CD8-positive, alpha-beta T cell (primary cell): ENCODE measurements at regions of chr10 and their contacts with region 1.

Region 1: DNA sequence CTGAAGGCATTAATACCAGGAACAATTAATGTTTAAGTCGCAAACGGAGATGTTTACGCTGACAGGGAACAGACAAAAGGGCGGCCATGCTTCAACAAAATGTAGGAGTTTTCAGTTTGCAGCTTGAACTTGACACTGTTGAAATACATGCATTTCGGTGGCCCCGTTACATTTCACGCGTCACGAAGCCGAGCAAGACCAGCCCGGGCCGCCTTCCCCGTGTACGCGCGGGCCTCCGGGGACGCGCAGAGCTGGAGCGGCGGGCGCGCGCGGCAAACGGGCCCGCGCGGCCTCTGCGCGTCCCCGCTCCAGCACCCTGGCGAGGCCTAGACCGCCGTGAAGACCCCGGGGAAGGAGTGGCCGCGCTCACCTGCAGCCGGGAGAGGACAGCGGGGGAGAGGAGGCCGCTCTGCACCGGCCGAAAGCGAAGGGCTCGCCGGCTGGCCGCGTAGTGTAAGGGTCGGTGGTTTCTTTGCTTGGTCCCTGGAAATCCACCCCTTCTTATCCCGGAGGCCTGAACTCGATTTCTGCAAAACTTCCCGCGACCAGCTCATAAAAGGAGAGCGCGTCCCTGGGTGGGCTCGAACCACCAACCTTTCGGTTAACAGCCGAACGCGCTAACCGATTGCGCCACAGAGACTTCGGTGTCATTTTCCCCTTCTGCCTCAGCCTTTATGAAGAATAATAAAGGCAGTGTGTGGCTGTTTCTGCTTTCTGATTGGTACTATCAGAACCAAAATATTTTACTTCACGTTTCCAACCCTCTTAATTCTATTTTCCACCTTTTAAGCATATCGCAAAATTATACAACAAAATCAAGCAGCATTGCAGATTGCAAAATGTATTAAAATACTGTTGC is 11.4 kb upstream of the EBLN1 start:
- DNase-seq: peak; percentile 66 to 92 (median 86)
- ATAC-seq: peak; percentile 76
- H3K4me3 ChIP-seq: peak overlapping the region; percentile 67 to 77
- H3K4me3 Mint-ChIP-seq: peak overlapping the region; percentile 82
- H3K27ac ChIP-seq: peak overlapping the region; percentile 60 to 63
- H3K27ac Mint-ChIP-seq: peak overlapping the region; percentile 98
- H3K4me1 ChIP-seq: peaks cover 8% of the 10 kb centered on the region
- H3K4me1 Mint-ChIP-seq: peaks cover 14% of the 10 kb centered on the region
- H3K27me3 ChIP-seq: peaks cover 0 to 3% of the 10 kb centered on the region in 2 experiments
- H3K27me3 Mint-ChIP-seq: no peaks in the 10 kb centered on the region
- CTCF ChIP-seq: no peak

Region 2: DNA sequence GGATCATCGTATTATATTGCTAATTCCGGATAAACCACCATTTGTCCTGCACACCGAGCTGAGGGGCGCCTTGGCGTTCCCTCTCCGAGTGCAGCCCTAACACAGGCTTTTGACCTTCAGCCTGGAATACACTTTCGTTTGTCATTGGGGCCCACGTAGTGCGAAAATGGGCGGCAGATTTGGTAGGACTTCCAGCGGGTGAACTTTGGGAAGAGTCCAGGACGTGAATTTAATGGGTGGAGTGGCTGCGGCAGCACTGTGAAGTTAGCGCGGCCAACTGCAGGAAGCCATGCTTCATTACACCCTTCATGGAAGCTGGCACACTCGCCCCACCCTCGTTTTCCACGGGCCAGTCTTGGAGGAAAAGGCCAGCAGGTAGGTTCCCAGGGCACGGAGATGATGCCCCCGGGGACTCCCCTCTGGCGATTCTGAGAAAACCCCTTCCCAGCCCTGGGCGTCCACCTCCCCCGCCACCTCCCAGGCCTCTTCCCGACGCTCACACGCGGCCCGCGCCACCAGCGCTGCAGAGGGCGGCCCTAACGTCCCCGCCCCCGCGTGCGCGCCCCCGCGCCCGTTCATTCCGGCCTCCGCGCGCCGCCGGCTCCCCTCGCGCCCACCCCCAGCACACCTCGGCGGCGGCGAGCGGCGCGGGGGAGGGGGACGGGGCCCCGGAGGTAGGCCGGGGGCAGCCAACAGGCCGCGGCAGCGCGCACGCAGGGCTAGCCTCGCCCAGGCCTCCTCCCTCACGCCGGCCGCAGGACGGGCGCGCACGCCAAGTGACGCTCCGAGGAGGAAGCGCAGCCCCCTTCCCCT is 695.5 kb before region 1 on chr10 and contains the start of gene MLLT10:
- CTCF ChIA-PET with region 1: no interaction called
- POLR2A ChIA-PET with region 1: no interaction called
- intact Hi-C with region 1: loop called (anchors 1 kb)
- DNase-seq: peak; percentile 83 to 98 (median 92)
- ATAC-seq: peak; percentile 84
- H3K4me3 ChIP-seq: peak within 1 kb of the TSS; percentile 69 to 81
- H3K4me3 Mint-ChIP-seq: peak within 1 kb of the TSS; percentile 96
- H3K27ac ChIP-seq: peak within 1 kb of the TSS; percentile 64 to 75
- H3K27ac Mint-ChIP-seq: peak within 1 kb of the TSS; percentile 94
- H3K4me1 ChIP-seq: peaks cover 16% of the 10 kb centered on the region
- H3K4me1 Mint-ChIP-seq: peaks cover 29% of the 10 kb centered on the region
- H3K27me3 ChIP-seq: no peaks in the 10 kb centered on the region
- H3K27me3 Mint-ChIP-seq: no peaks in the 10 kb centered on the region
- CTCF ChIP-seq: peak; percentile 22
- total RNA-seq, gene MLLT10: 36.7 to 41.0 TPM

Region 3: GRCh38 chr10:22022257-22023032 is 206.7 kb before region 1 on chr10:
- CTCF ChIA-PET with region 1: no interaction called
- POLR2A ChIA-PET with region 1: no interaction called
- intact Hi-C with region 1: loop called in 1 of 2 experiments (anchors 5 kb)
- DNase-seq: peak; percentile 8 to 71 (median 40)
- ATAC-seq: peak; percentile 95
- H3K4me3 ChIP-seq: peak overlapping the region; percentile 23 to 33
- H3K4me3 Mint-ChIP-seq: peak overlapping the region; percentile 81
- H3K27ac ChIP-seq: peak overlapping the region; percentile 18 to 61
- H3K27ac Mint-ChIP-seq: peak overlapping the region; percentile 95
- H3K4me1 ChIP-seq: peaks cover 13% of the 10 kb centered on the region
- H3K4me1 Mint-ChIP-seq: peaks cover 15% of the 10 kb centered on the region
- H3K27me3 ChIP-seq: no peaks in the 10 kb centered on the region
- H3K27me3 Mint-ChIP-seq: no peaks in the 10 kb centered on the region
- CTCF ChIP-seq: no peak

Region 4: DNA sequence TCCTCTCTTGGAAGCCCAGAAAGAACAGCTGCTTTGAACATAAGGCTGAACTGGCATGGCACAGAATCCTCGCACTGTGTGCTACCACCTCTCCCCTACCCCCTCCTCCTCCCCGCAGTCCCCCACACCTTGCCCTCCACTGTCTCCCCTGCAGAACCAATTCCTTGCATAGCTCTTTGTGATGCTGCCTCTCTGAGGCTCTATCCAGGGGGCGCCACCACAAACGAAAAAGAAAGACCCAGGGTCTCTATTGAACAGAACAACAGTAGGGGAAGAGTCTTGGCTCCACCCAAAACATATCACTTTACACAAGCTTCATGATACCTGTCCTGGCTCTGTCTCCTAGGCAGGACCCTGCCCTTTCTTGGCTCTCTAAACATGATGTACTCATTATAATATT is 14.8 kb after region 1 on chr10:
- CTCF ChIA-PET with region 1: interaction called, 4 read pairs
- POLR2A ChIA-PET with region 1: interaction called, 4 read pairs
- intact Hi-C with region 1: loop called (anchors 1 to 2 kb)
- DNase-seq: peak in 2 of 9 experiments; percentile 15 to 29
- ATAC-seq: no peak
- H3K4me3 ChIP-seq: no peak overlapping the region
- H3K4me3 Mint-ChIP-seq: no peak overlapping the region
- H3K27ac ChIP-seq: no peak overlapping the region
- H3K27ac Mint-ChIP-seq: no peak overlapping the region
- H3K4me1 ChIP-seq: no peaks in the 10 kb centered on the region
- H3K4me1 Mint-ChIP-seq: peaks cover 9% of the 10 kb centered on the region
- H3K27me3 ChIP-seq: peaks cover 0 to 3% of the 10 kb centered on the region in 2 experiments
- H3K27me3 Mint-ChIP-seq: peaks cover 21% of the 10 kb centered on the region
- CTCF ChIP-seq: no peak

Region 5: DNA sequence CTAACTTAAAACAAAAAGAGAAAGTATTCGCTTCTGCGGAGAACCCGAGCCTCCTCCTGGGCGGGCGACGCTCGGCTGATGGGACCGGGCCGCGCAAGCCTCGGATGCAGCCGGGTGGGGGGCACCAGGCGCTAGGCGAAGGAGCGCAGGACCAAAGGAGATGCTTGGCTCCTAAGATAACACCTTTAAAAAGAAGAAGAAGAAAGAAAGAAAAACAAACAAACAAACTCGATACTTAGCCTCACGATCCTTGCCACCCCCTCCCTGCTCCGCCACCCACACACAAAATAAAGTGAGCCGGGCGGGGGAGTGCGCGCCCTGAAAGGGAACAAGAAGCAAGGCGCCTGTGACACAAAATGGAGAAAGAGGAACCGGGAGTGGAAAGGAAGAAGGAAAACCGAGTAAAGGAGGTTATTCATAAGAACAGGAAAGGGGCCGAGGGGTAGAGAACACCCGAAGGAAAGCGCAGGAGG is 22.6 kb after region 1 on chr10:
- CTCF ChIA-PET with region 1: no interaction called
- POLR2A ChIA-PET with region 1: interaction called, 7 read pairs
- intact Hi-C with region 1: loop called (anchors 1 kb)
- DNase-seq: peak; percentile 25 to 82 (median 63)
- ATAC-seq: peak; percentile 59
- H3K4me3 ChIP-seq: peak overlapping the region; percentile 59 to 67
- H3K4me3 Mint-ChIP-seq: peak overlapping the region; percentile 94
- H3K27ac ChIP-seq: peak overlapping the region; percentile 77 to 85
- H3K27ac Mint-ChIP-seq: peak overlapping the region; percentile 98
- H3K4me1 ChIP-seq: peaks cover 6% of the 10 kb centered on the region
- H3K4me1 Mint-ChIP-seq: peaks cover 24% of the 10 kb centered on the region
- H3K27me3 ChIP-seq: peaks cover 9 to 10% of the 10 kb centered on the region in 2 experiments
- H3K27me3 Mint-ChIP-seq: peaks cover 30% of the 10 kb centered on the region
- CTCF ChIP-seq: no peak